ENCODE measurements at regions of chr19 and their contacts with region 1.

Region 1: DNA sequence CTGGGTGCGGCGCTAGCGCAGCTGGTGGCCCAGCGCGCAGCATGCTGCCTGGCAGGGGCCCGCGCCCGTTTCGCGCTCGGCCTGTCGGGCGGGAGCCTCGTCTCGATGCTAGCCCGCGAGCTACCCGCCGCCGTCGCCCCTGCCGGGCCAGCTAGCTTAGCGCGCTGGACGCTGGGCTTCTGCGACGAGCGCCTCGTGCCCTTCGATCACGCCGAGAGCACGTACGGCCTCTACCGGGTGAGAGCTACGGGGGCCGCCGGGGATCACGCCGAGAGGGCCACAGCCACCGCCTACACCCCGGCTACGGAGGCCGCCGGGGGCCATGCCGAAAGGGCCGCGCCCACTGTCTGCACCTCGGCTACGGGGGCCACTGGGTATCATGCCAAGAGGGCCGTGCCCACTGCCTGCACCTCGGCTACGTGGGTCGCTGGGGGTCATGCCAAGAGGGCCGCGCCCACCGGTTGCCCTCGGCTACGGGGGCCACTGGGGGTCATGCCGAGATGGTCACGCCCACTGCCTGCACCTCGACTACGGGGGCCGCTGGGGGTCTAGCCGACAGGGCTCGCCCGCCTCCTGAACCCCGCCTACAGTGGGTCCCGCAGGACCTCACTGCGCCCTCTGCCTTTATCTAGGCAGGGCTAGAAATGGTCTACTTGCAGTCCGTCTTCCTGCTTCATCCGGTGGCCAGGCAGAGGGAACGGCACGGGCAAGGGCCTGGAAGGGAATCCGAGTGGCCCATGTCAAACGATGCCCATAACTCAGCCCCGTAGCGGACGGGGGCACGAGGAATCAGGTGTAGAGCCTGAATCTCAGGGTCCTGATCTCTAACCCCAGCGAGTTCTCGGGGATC is 500 bp downstream of the PGLS start:
- DNase-seq: peak; percentile 75 to 93 (median 90)
- ATAC-seq: peak; percentile 89
- H3K4me3 ChIP-seq: peak overlapping the region; percentile 75
- H3K4me3 Mint-ChIP-seq: peak overlapping the region; percentile 89 to 100 (median 99)
- H3K27ac ChIP-seq: peak overlapping the region; percentile 98
- H3K27ac Mint-ChIP-seq: peak overlapping the region; percentile 86 to 96 (median 92)
- H3K4me1 ChIP-seq: peaks cover 0 to 20% of the 10 kb centered on the region in 2 donors
- H3K4me1 Mint-ChIP-seq: peaks cover 26 to 46% (median 41%) of the 10 kb centered on the region in 7 donors
- H3K27me3 ChIP-seq: no peaks in the 10 kb centered on the region
- H3K27me3 Mint-ChIP-seq: no peaks in the 10 kb centered on the region

Region 2: GRCh38 chr19:17305517-17306284 is 206.2 kb before region 1 on chr19 and contains the start of gene MRPL34:
- CTCF ChIA-PET with region 1: no interaction called
- POLR2A ChIA-PET with region 1: interaction called, 6 read pairs
- intact Hi-C with region 1: loop called in 1 of 2 experiments (anchors 5 kb)
- DNase-seq: peak; percentile 81 to 96 (median 93)
- ATAC-seq: peak; percentile 65
- H3K4me3 ChIP-seq: peak within 1 kb of the TSS; percentile 93
- H3K4me3 Mint-ChIP-seq: peak within 1 kb of the TSS; percentile 82 to 94 (median 90)
- H3K27ac ChIP-seq: peak within 1 kb of the TSS; percentile 81
- H3K27ac Mint-ChIP-seq: peak within 1 kb of the TSS; percentile 82 to 93 (median 90)
- H3K4me1 ChIP-seq: peaks cover 22 to 32% of the 10 kb centered on the region in 2 donors
- H3K4me1 Mint-ChIP-seq: peaks cover 28 to 64% (median 57%) of the 10 kb centered on the region in 7 donors
- H3K27me3 ChIP-seq: no peaks in the 10 kb centered on the region
- H3K27me3 Mint-ChIP-seq: no peaks in the 10 kb centered on the region
- total RNA-seq, gene MRPL34: 37.0 to 76.0 (median 73.3) TPM

Region 3: GRCh38 chr19:17385878-17386611 is 125.9 kb before region 1 on chr19:
- CTCF ChIA-PET with region 1: no interaction called
- POLR2A ChIA-PET with region 1: no interaction called
- intact Hi-C with region 1: no loop called
- DNase-seq: peak; percentile 31 to 71 (median 52)
- ATAC-seq: peak; percentile 59
- H3K4me3 ChIP-seq: no peak overlapping the region
- H3K4me3 Mint-ChIP-seq: no peak overlapping the region
- H3K27ac ChIP-seq: no peak overlapping the region
- H3K27ac Mint-ChIP-seq: no peak overlapping the region
- H3K4me1 ChIP-seq: peaks cover 3% of the 10 kb centered on the region in 2 donors
- H3K4me1 Mint-ChIP-seq: peaks cover 4 to 16% (median 12%) of the 10 kb centered on the region in 7 donors
- H3K27me3 ChIP-seq: no peaks in the 10 kb centered on the region
- H3K27me3 Mint-ChIP-seq: peaks cover 0 to 22% (median 0%) of the 10 kb centered on the region in 5 donors

Region 4: DNA sequence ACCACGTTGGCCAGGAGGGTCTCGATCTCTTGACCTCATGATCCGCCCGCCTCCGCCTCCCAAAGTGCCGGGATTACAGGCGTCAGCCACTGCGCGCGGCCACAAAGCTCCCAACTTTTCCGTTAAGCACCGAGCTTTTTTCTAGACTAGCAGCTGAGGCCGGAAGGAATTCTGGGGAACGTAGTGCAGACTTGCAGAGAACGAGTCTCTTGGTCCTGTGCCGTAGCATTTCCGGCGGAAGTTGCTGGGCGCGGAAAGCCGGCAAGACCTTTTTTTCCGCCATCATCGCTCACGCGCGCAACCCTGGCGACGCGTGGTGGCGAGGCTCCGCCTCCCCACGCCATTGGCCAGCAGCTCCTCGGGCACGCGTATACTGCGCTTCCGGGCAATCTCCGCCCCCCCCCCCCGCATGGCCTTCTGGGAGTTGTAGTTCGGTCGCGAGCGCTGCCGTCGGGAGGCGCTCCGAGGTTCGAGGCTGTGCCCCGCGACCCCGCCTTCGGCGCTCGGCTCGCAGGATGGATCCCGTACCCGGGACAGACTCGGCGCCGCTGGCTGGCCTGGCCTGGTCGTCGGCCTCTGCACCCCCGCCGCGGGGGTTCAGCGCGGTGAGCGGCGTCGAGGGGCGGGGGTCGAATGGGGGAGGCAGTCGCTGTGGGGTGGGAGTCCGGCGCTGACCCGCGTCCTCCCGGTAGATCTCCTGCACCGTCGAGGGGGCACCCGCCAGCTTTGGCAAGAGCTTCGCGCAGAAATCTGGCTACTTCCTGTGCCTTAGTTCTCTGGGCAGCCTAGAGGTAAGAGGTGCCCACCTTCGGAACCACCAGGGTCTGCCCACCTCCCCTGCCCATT is 92.1 kb before region 1 on chr19 and contains the start of gene MVB12A:
- CTCF ChIA-PET with region 1: no interaction called
- POLR2A ChIA-PET with region 1: interaction called, 7 read pairs
- intact Hi-C with region 1: loop called in 1 of 2 experiments (anchors 1 kb)
- DNase-seq: peak; percentile 85 to 98 (median 96)
- ATAC-seq: peak; percentile 99
- H3K4me3 ChIP-seq: peak within 1 kb of the TSS; percentile 79
- H3K4me3 Mint-ChIP-seq: peak within 1 kb of the TSS; percentile 87 to 95 (median 91)
- H3K27ac ChIP-seq: peak within 1 kb of the TSS; percentile 70
- H3K27ac Mint-ChIP-seq: peak within 1 kb of the TSS; percentile 73 to 93 (median 89)
- H3K4me1 ChIP-seq: peaks cover 12 to 15% of the 10 kb centered on the region in 2 donors
- H3K4me1 Mint-ChIP-seq: peaks cover 4 to 28% (median 19%) of the 10 kb centered on the region in 7 donors
- H3K27me3 ChIP-seq: no peaks in the 10 kb centered on the region
- H3K27me3 Mint-ChIP-seq: no peaks in the 10 kb centered on the region
- total RNA-seq, gene MVB12A: 19.5 to 45.1 (median 33.3) TPM

Region 5: DNA sequence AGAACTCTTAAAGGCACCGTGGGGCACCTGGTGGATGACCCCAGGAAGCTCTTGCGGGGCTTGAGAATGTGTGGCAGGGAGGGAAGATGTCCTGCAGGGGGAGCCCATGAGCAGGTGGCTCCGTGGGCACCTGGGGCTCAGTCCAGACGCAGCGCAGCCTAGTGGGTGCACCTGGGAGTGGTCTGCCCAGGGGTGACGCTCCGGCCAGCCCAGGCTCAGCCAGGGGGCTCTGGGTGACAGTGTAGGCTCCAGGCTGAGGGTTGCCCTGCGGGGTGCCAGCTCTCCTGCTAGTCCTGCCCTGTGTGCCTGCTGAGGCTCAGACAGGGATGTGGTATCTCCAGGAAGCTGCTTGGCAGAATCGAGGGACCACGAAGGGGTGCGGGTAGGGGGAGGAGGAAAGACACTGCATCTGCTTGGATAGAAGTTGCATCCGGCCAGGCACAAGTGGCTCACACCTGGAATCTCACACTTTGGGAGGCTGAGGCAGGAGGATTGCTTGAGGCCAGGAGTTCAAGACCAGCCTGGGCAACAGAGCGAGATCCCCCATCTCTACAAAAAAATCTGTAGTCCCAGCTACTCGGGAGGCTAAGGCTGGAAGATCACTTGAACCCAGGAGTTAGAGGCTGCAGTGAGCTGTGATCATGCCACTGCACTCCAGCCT is 15.5 kb before region 1 on chr19:
- CTCF ChIA-PET with region 1: interaction called, 13 read pairs
- POLR2A ChIA-PET with region 1: interaction called, 4 read pairs
- intact Hi-C with region 1: no loop called
- DNase-seq: peak; percentile 61 to 82 (median 71)
- ATAC-seq: peak; percentile 100
- H3K4me3 ChIP-seq: peak overlapping the region; percentile 16
- H3K4me3 Mint-ChIP-seq: peak overlapping the region in 4 of 10 donors; percentile 11 to 46 (median 23)
- H3K27ac ChIP-seq: no peak overlapping the region
- H3K27ac Mint-ChIP-seq: peak overlapping the region in 4 of 9 donors; percentile 26 to 72 (median 50)
- H3K4me1 ChIP-seq: peaks cover 8 to 15% of the 10 kb centered on the region in 2 donors
- H3K4me1 Mint-ChIP-seq: peaks cover 13 to 30% (median 27%) of the 10 kb centered on the region in 7 donors
- H3K27me3 ChIP-seq: no peaks in the 10 kb centered on the region
- H3K27me3 Mint-ChIP-seq: no peaks in the 10 kb centered on the region

Region 6: GRCh38 chr19:17555480-17555928 is 43.6 kb after region 1 on chr19 and contains the start of gene COLGALT1:
- CTCF ChIA-PET with region 1: interaction called, 5 read pairs
- POLR2A ChIA-PET with region 1: interaction called, 12 read pairs
- intact Hi-C with region 1: loop called (anchors 1 kb)
- DNase-seq: peak; percentile 92 to 99 (median 96)
- ATAC-seq: peak; percentile 99
- H3K4me3 ChIP-seq: peak within 1 kb of the TSS; percentile 81
- H3K4me3 Mint-ChIP-seq: peak within 1 kb of the TSS; percentile 73 to 90 (median 84)
- H3K27ac ChIP-seq: peak within 1 kb of the TSS; percentile 76
- H3K27ac Mint-ChIP-seq: peak within 1 kb of the TSS in 6 of 9 donors; percentile 36 to 80 (median 66)
- H3K4me1 ChIP-seq: peaks cover 16% of the 10 kb centered on the region in 2 donors
- H3K4me1 Mint-ChIP-seq: peaks cover 8 to 29% (median 20%) of the 10 kb centered on the region in 7 donors
- H3K27me3 ChIP-seq: no peaks in the 10 kb centered on the region
- H3K27me3 Mint-ChIP-seq: no peaks in the 10 kb centered on the region
- total RNA-seq, gene COLGALT1: 50.1 to 70.6 (median 61.3) TPM

Region 7: DNA sequence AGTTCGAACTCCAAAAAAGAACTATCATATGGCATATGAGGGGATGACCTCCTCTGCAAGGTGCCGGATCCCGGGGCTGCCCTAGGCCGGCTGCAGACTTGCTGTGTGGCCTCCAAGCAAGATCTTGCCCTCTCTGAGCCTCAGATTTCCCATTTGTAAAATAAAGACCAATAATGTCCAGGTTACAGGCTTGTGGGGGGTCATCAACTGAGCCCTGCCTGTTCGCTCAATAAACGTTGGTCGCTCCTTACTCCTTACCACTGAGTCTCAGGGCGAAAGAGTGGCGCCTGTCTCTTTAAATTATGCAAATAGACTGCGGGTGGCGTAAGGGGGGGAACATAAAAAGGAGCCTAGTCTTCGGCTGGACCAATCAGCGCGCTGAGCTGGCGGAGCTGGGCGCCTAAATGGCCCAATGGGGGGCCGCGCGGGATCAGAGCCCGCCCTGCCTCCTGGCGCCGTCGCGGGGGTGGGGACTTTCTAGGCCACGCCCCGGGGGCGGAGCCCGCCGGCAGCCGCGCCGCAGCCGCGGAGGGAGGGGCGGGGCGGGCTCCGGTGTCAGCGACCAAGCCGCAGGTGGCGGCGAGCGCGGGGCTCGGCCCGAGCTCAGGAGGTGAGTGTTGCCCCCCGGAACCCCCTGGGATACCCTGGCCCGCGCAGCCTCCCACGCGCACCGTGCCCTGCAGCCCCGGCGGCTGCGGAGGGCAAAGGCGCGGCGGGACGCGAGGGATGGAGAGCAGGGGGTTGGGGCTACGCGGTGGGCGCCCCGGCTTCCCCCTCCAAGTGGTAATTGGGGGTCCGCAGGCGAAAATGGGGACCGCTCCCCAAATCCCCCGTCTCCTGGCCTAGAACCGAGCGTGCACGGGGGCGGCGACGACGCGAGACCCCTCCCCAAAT is 235.5 kb after region 1 on chr19:
- CTCF ChIA-PET with region 1: no interaction called
- POLR2A ChIA-PET with region 1: no interaction called
- intact Hi-C with region 1: loop called in 1 of 2 experiments (anchors 1 kb)
- DNase-seq: peak; percentile 90 to 99 (median 95)
- ATAC-seq: peak; percentile 96
- H3K4me3 ChIP-seq: peak overlapping the region; percentile 59
- H3K4me3 Mint-ChIP-seq: peak overlapping the region; percentile 87 to 100 (median 94)
- H3K27ac ChIP-seq: peak overlapping the region; percentile 73
- H3K27ac Mint-ChIP-seq: peak overlapping the region; percentile 14 to 88 (median 72)
- H3K4me1 ChIP-seq: peaks cover 31 to 37% of the 10 kb centered on the region in 2 donors
- H3K4me1 Mint-ChIP-seq: peaks cover 35 to 49% (median 39%) of the 10 kb centered on the region in 7 donors
- H3K27me3 ChIP-seq: no peaks in the 10 kb centered on the region
- H3K27me3 Mint-ChIP-seq: no peaks in the 10 kb centered on the region

Region 8: DNA sequence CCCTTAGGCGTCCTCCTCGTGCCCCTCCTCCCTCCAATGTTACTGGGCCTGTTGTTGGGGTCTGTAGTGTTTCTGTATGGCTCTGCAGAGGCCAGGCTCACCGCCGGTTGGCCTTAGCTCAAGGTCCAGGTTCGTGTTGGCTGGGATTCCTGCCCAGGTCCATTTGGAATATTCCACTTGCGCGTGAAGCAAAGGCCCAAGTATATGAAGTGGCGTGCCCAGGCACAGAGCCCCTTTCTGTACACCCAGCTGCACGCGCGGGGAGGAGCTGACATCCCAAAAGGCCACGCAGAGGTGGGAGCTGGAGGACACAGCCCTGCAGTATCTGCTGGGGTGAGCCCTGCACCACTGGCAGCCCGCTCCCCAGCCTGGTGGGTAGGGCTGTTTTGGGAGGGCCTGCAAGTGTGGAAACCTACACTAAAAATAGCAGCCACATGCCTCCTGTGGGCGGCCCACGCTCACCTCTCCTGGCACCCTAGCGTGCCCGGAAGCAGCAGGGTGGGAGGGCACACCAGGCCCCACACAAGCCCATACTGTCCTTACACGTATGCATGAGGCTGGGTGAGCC is 1201.7 kb after region 1 on chr19:
- CTCF ChIA-PET with region 1: interaction called, 11 read pairs
- POLR2A ChIA-PET with region 1: no interaction called
- intact Hi-C with region 1: no loop called
- DNase-seq: no peak
- ATAC-seq: no peak
- H3K4me3 ChIP-seq: no peak overlapping the region
- H3K4me3 Mint-ChIP-seq: no peak overlapping the region
- H3K27ac ChIP-seq: no peak overlapping the region
- H3K27ac Mint-ChIP-seq: peak overlapping the region in 1 of 9 donors; percentile 59
- H3K4me1 ChIP-seq: peaks cover 6% of the 10 kb centered on the region in 2 donors
- H3K4me1 Mint-ChIP-seq: peaks cover 2 to 36% (median 29%) of the 10 kb centered on the region in 7 donors
- H3K27me3 ChIP-seq: no peaks in the 10 kb centered on the region
- H3K27me3 Mint-ChIP-seq: no peaks in the 10 kb centered on the region

Measured in naive thymus-derived CD4-positive, alpha-beta T cell (primary cell).